Endothelial cell of umbilical vein (primary cell): ENCODE measurements at regions of chr16 and their contacts with region 1.

Region 1: GRCh38 chr16:15822957-15823356 is 33.9 kb downstream of the MYH11 start:
- DNase-seq: no peak
- H3K4me3 ChIP-seq: no peak overlapping the region
- H3K27ac ChIP-seq: no peak overlapping the region
- H3K4me1 ChIP-seq: no peaks in the 10 kb centered on the region
- H3K27me3 ChIP-seq: peaks cover 0 to 2% of the 10 kb centered on the region in 2 experiments
- CTCF ChIP-seq: no peak
- POLR2A ChIP-seq: no peak

Region 2: GRCh38 chr16:15765880-15766279 is 57.1 kb before region 1 on chr16:
- CTCF ChIA-PET with region 1: interaction called, 73 read pairs
- POLR2A ChIA-PET with region 1: no interaction called
- dilution Hi-C with region 1: no loop called
- intact Hi-C with region 1: loop called (anchors 1 kb)
- DNase-seq: peak; percentile 44
- H3K4me3 ChIP-seq: no peak overlapping the region
- H3K27ac ChIP-seq: no peak overlapping the region
- H3K4me1 ChIP-seq: no peaks in the 10 kb centered on the region
- H3K27me3 ChIP-seq: peaks cover 2 to 6% of the 10 kb centered on the region in 2 experiments
- CTCF ChIP-seq: peak; percentile 61 to 72
- POLR2A ChIP-seq: no peak

Region 3: GRCh38 chr16:15777533-15778203 is 45.3 kb before region 1 on chr16:
- CTCF ChIA-PET with region 1: interaction called, 66 read pairs
- POLR2A ChIA-PET with region 1: no interaction called
- dilution Hi-C with region 1: no loop called
- intact Hi-C with region 1: loop called (anchors 2 kb)
- DNase-seq: peak; percentile 54
- H3K4me3 ChIP-seq: no peak overlapping the region
- H3K27ac ChIP-seq: no peak overlapping the region
- H3K4me1 ChIP-seq: no peaks in the 10 kb centered on the region
- H3K27me3 ChIP-seq: peaks cover 4 to 5% of the 10 kb centered on the region in 2 experiments
- CTCF ChIP-seq: peak; percentile 17 to 54
- POLR2A ChIP-seq: no peak

Region 4: GRCh38 chr16:15792559-15792971 is 30.4 kb before region 1 on chr16:
- CTCF ChIA-PET with region 1: interaction called, 12 read pairs
- POLR2A ChIA-PET with region 1: no interaction called
- dilution Hi-C with region 1: no loop called
- intact Hi-C with region 1: no loop called
- DNase-seq: no peak
- H3K4me3 ChIP-seq: no peak overlapping the region
- H3K27ac ChIP-seq: no peak overlapping the region
- H3K4me1 ChIP-seq: peaks cover 2% of the 10 kb centered on the region
- H3K27me3 ChIP-seq: peaks cover 0 to 4% of the 10 kb centered on the region in 2 experiments
- CTCF ChIP-seq: no peak
- POLR2A ChIP-seq: no peak

Region 5: GRCh38 chr16:15811481-15812400 is 11.2 kb before region 1 on chr16:
- CTCF ChIA-PET with region 1: interaction called, 68 read pairs
- POLR2A ChIA-PET with region 1: no interaction called
- dilution Hi-C with region 1: no loop called
- intact Hi-C with region 1: no loop called
- DNase-seq: no peak
- H3K4me3 ChIP-seq: no peak overlapping the region
- H3K27ac ChIP-seq: no peak overlapping the region
- H3K4me1 ChIP-seq: no peaks in the 10 kb centered on the region
- H3K27me3 ChIP-seq: peaks cover 10 to 29% of the 10 kb centered on the region in 2 experiments
- CTCF ChIP-seq: no peak
- POLR2A ChIP-seq: no peak

Region 6: GRCh38 chr16:15835136-15835878 is 12.3 kb after region 1 on chr16:
- CTCF ChIA-PET with region 1: interaction called, 44 read pairs
- POLR2A ChIA-PET with region 1: no interaction called
- dilution Hi-C with region 1: no loop called
- intact Hi-C with region 1: no loop called
- DNase-seq: no peak
- H3K4me3 ChIP-seq: no peak overlapping the region
- H3K27ac ChIP-seq: no peak overlapping the region
- H3K4me1 ChIP-seq: no peaks in the 10 kb centered on the region
- H3K27me3 ChIP-seq: no peaks in the 10 kb centered on the region
- CTCF ChIP-seq: no peak
- POLR2A ChIP-seq: no peak

Region 7: DNA sequence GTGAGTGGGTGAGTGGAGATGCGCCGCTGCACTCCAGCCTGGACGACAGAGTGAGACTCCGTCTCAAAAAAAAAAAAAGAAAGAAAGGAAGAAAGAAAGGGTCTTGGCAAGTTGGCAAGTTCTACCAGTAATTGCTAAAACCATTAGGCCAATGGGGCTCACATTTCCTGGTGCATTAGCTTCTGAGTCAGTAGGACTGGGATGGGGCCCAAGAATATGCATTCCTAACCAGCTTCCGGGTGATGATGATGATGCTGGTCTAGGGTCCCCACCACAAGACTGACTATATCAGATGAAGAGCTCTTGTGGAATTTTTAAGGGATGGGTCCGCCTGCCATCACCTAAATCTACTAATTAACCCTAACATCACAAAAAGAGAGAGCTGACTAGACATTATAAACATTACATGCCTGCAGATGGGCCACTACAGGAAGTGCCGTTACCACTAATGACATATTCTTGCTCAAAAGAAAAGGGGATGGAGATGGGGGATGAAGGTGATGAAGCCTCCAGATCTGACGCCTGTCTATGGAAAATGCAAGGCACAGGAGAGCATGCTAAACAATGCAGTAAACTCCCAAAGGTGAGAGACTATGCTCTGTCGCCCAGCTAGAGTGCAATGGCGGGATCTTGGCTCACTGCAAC is 20.8 kb after region 1 on chr16:
- CTCF ChIA-PET with region 1: interaction called, 23 read pairs
- POLR2A ChIA-PET with region 1: no interaction called
- dilution Hi-C with region 1: no loop called
- intact Hi-C with region 1: no loop called
- DNase-seq: no peak
- H3K4me3 ChIP-seq: no peak overlapping the region
- H3K27ac ChIP-seq: no peak overlapping the region
- H3K4me1 ChIP-seq: no peaks in the 10 kb centered on the region
- H3K27me3 ChIP-seq: peaks cover 2 to 6% of the 10 kb centered on the region in 2 experiments
- CTCF ChIP-seq: no peak
- POLR2A ChIP-seq: no peak